Gastrocnemius medialis (tissue), 4 donors: ENCODE measurements at regions of chr3 and their contacts with region 1.

Region 1: GRCh38 chr3:173553635-173554280 is 156.2 kb downstream of the NLGN1 start:
- DNase-seq: no peak
- ATAC-seq: no peak
- H3K4me3 ChIP-seq: no peak overlapping the region
- H3K27ac ChIP-seq: no peak overlapping the region
- H3K4me1 ChIP-seq: no peaks in the 10 kb centered on the region
- H3K27me3 ChIP-seq: no peaks in the 10 kb centered on the region
- CTCF ChIP-seq: peak in 3 of 5 experiments; percentile 24 to 58 (median 45)
- POLR2A ChIP-seq: no peak

Region 2: GRCh38 chr3:173371848-173372487 is 181.8 kb before region 1 on chr3:
- in situ Hi-C with region 1: no loop called
- intact Hi-C with region 1: loop called (anchors 5 kb)
- DNase-seq: no peak
- ATAC-seq: no peak
- H3K4me3 ChIP-seq: no peak overlapping the region
- H3K27ac ChIP-seq: no peak overlapping the region
- H3K4me1 ChIP-seq: no peaks in the 10 kb centered on the region
- H3K27me3 ChIP-seq: no peaks in the 10 kb centered on the region
- CTCF ChIP-seq: peak in 3 of 5 experiments; percentile 28 to 51 (median 46)
- POLR2A ChIP-seq: no peak